ENCODE measurements at regions of chr10 and their contacts with region 1.

Region 1: DNA sequence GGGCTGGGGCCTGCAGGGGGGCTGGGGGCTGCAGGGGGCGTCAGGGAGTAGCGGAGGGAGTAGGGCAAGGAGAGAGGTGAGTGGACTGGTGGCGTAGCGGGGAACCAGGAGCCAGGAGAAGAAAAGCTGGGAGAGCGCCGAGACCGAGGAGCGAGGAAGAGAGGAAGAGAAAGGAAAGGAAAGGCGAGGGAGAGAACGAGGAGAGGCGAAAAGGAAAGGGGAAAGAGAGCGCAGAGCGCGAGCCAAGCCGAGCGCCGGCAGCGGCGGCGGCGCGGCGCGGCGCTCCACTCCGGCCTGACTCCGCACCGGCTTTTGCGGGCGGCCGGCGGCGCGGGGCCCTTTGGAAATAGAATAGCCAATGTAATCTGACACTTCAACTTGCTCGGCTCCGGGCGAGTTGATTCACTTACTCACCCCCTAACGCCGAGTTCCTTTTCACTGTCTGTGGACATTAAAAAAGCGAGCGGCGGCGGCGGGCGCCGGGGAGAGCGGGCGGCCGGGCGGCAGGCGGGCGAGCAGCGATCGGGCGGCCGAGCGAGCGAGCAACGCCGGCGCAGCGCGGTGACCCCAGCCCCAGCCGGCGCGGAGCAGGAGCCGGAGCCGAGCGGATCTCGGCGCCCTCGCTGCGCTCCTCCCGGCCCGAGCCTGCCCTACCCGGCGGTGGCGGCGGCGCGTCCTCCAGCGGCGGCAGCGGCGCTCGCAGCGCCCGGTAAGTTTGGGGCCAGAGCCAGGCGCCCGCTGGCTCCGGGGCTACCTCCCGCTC is at the start of gene ZMIZ1:
- DNase-seq: peak; percentile 89 to 93
- ATAC-seq: peak; percentile 49 to 61 (median 52)
- H3K4me3 ChIP-seq: peak within 1 kb of the TSS; percentile 94
- H3K27ac ChIP-seq: peak within 1 kb of the TSS; percentile 97
- H3K4me1 ChIP-seq: peaks cover 29% of the 10 kb centered on the region
- H3K27me3 ChIP-seq: no peaks in the 10 kb centered on the region
- CTCF ChIP-seq: peak; percentile 45
- total RNA-seq, gene ZMIZ1: 30.0 to 37.6 (median 35.4) TPM

Region 2: GRCh38 chr10:78047314-78047891 is 1021.3 kb before region 1 on chr10:
- intact Hi-C with region 1: loop called in 1 of 2 experiments (anchors 10 kb)
- DNase-seq: peak; percentile 87 to 92
- ATAC-seq: peak; percentile 75 to 89 (median 84)
- H3K4me3 ChIP-seq: no peak overlapping the region
- H3K27ac ChIP-seq: no peak overlapping the region
- H3K4me1 ChIP-seq: peaks cover 11% of the 10 kb centered on the region
- H3K27me3 ChIP-seq: no peaks in the 10 kb centered on the region
- CTCF ChIP-seq: peak; percentile 86

Region 3: DNA sequence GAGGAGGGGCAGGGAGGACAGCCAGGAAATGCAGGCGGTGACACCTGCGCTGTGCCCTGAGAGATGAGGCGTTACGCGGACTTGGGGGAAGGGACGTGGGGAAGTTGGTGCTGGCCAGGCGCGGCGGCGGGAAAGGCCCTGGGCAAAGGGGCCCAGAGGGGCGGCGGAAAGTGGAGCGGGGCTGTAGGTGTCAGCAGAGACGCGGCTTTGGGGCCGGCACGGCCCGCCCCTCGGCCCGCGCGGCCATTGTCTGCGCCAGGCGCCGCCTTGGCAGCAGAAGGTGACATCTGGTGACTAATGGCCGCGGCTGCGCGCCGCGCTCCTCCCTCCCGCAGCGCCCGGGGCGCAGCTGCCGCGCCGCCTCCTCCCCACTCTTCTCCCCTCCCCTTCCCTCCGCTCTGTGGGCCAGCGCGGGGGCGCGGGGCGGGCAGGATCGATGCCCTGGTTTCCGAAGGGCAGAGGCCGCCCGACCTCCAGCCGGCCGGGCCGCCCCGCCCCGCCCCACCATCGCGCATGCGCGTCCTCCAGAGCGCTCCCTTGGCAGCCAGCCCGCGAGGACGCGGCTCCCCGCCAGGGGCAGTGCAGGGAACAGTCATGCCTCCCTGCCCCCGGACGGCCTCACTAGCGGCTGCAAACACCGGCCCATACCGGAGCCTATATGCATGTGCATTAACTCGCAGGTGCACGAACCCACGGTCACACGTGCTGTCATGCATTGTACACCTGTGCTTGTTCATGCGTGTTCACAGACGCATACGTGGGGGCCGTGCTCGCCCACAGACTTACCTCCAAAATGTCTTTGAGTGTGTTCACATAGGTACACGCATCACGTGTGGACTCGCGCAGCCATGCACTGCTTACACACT is 765.5 kb before region 1 on chr10:
- intact Hi-C with region 1: loop called in 1 of 2 experiments (anchors 10 kb)
- DNase-seq: peak; percentile 96 to 97
- ATAC-seq: peak; percentile 94 to 96 (median 96)
- H3K4me3 ChIP-seq: peak overlapping the region; percentile 79
- H3K27ac ChIP-seq: peak overlapping the region; percentile 89
- H3K4me1 ChIP-seq: peaks cover 14% of the 10 kb centered on the region
- H3K27me3 ChIP-seq: no peaks in the 10 kb centered on the region
- CTCF ChIP-seq: peak; percentile 60

Region 4: DNA sequence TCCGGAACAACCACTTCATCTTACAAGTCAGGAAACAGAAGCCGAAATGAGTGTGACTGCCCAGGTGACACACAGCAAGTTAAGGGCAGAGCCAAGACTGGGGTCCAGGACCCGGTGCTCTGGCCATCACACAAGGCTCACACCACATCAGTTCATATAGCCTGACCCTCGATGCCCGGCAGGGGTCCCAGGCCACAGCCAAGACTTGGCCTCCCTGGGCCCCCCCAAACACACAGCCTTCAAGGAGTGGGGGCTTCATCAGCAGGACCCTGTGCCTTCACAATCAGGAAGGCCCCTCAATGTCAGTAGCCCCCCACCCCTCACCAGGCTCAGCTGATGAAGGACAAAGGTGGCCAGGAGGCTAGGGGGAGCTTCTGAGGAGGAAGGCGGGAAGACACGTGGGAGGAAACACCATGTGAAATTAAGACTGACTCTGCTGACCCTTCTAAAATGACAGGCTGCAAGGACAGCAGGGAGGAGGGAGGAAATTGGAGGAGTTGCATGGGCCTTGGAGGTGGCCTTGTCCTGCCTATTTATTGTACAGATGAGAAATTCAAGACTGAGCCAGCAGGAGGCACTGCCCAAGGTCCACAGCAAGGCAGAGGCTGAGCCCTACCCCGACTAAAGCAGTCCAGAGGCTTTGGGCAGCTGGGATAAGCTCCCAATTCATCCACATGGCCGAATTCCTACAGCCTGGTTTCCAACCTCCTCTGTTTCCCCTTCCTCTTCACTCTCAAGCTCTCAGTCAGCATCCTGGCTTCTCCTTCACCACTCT is 216.1 kb before region 1 on chr10:
- intact Hi-C with region 1: loop called in 1 of 2 experiments (anchors 1 kb)
- DNase-seq: no peak
- ATAC-seq: no peak
- H3K4me3 ChIP-seq: no peak overlapping the region
- H3K27ac ChIP-seq: no peak overlapping the region
- H3K4me1 ChIP-seq: peaks cover 10% of the 10 kb centered on the region
- H3K27me3 ChIP-seq: no peaks in the 10 kb centered on the region
- CTCF ChIP-seq: no peak

Region 5: GRCh38 chr10:78972947-78973900 is 95.5 kb before region 1 on chr10:
- intact Hi-C with region 1: loop called (anchors 2 kb)
- DNase-seq: peak; percentile 81 to 90
- ATAC-seq: peak; percentile 73 to 78 (median 76)
- H3K4me3 ChIP-seq: peak overlapping the region; percentile 65
- H3K27ac ChIP-seq: peak overlapping the region; percentile 99
- H3K4me1 ChIP-seq: peaks cover 27% of the 10 kb centered on the region
- H3K27me3 ChIP-seq: no peaks in the 10 kb centered on the region
- CTCF ChIP-seq: no peak

Region 6: DNA sequence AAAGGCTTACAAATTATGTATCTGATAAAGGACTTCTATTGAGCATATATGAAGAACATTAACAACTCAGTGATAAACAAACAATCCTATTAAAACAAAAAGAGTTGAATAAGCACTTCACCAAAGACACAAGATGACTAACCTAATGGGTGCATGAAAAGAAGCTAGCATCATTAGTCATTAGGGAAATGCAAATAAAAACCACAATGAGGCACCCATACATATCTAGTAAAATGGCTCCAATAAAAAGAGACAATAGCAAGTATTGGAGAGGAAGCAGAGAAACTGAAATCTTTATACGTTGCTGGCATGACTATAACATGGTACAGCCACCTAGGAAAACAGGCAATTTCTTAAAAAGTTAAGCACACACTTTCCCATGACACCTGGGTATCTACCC is 77.6 kb before region 1 on chr10:
- intact Hi-C with region 1: no loop called
- DNase-seq: no peak
- ATAC-seq: no peak
- H3K4me3 ChIP-seq: no peak overlapping the region
- H3K27ac ChIP-seq: no peak overlapping the region
- H3K4me1 ChIP-seq: peaks cover 12% of the 10 kb centered on the region
- H3K27me3 ChIP-seq: no peaks in the 10 kb centered on the region
- CTCF ChIP-seq: no peak

Region 7: DNA sequence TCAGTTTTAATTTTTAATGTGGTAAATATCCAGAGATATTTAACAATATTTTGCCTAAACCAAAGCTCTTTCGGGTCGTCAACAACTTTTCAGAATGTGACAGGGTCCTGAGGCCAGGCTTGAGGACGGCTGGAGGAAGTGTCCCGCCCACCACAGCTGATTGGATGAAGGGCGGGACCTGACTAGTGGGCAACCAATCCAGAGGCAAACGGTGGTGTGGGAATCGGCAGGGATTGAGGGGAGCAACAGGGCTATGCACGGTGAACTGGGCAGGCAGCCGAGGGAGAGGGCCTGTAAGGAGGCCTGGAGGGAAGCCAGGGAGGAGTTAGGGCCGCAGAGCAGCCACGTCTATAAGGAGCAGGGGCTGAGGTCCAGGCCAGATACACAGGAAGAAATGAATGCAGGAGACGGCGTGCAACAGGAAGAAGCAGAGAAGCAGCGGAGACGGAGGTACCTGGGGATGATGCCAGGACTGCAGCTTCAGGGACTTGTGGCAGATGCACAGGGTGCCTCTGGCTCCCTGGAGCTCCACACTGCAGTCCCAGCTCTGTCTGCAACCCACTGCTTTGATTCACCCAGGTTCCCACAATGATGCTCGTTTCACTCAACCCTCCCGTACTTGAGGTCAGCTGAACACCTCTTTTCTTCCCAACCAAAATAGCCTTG is 46.0 kb before region 1 on chr10:
- intact Hi-C with region 1: loop called in 1 of 2 experiments (anchors 1 kb)
- DNase-seq: peak; percentile 59 to 73
- ATAC-seq: peak; percentile 65 to 82 (median 80)
- H3K4me3 ChIP-seq: peak overlapping the region; percentile 49
- H3K27ac ChIP-seq: peak overlapping the region; percentile 92
- H3K4me1 ChIP-seq: peaks cover 24% of the 10 kb centered on the region
- H3K27me3 ChIP-seq: no peaks in the 10 kb centered on the region
- CTCF ChIP-seq: no peak

Region 8: GRCh38 chr10:79137826-79138225 is 69.1 kb after region 1 on chr10:
- intact Hi-C with region 1: no loop called
- DNase-seq: peak; percentile 65 to 74
- ATAC-seq: peak; percentile 68 to 81 (median 75)
- H3K4me3 ChIP-seq: peak overlapping the region; percentile 7
- H3K27ac ChIP-seq: peak overlapping the region; percentile 73
- H3K4me1 ChIP-seq: peaks cover 79% of the 10 kb centered on the region
- H3K27me3 ChIP-seq: no peaks in the 10 kb centered on the region
- CTCF ChIP-seq: no peak

Region 9: DNA sequence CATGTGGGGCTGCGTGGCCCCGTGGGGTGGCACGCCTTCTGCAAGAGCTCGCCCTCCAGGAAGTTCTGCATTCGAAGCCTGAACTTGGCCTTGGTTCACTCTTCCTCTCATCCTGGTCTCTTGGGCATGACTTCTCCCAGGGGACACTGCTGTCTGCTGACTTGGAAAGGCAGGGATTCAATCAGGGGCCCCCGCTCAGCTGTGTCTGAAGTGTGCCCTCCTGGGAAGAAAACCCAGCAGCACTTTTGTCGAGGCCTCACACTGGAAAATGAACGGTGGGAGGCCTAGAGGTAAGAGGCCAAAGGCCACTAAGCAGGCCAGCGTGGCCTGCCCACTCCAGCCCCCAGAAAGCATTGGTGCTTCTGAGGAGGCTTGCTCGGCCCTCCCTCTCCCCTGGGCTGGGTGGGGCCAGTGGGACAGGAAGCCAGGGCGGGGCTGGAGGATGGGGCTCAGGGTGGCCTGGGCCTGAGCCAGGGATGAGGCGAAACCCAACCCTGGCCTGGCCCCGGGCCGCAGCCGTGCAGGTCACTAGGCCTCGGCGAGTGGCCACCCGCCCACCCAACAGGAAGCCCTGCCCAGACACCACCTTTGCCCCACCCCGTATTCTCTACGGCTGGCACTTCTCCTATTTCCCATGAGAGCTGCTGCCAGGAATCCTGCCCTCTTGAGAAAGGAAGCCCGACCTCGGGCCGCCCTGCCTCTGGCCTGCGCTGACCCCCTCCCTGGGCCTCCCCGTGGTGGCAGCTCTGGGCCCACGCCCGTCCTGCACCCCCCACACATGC is 81.1 kb after region 1 on chr10:
- intact Hi-C with region 1: loop called in 1 of 2 experiments (anchors 5 kb)
- DNase-seq: peak; percentile 92 to 96
- ATAC-seq: peak; percentile 66 to 73 (median 71)
- H3K4me3 ChIP-seq: peak overlapping the region; percentile 28
- H3K27ac ChIP-seq: peak overlapping the region; percentile 75
- H3K4me1 ChIP-seq: peaks cover 94% of the 10 kb centered on the region
- H3K27me3 ChIP-seq: no peaks in the 10 kb centered on the region
- CTCF ChIP-seq: no peak

Region 10: GRCh38 chr10:79422178-79422892 is 353.6 kb after region 1 on chr10:
- intact Hi-C with region 1: no loop called
- DNase-seq: peak; percentile 72 to 83
- ATAC-seq: peak in 1 of 4 donors; percentile 24
- H3K4me3 ChIP-seq: no peak overlapping the region
- H3K27ac ChIP-seq: peak overlapping the region; percentile 82
- H3K4me1 ChIP-seq: peaks cover 86% of the 10 kb centered on the region
- H3K27me3 ChIP-seq: no peaks in the 10 kb centered on the region
- CTCF ChIP-seq: no peak